ENCODE measurements at regions of chr10 and their contacts with region 1.

Region 1: GRCh38 chr10:132359305-132360040 is 27.5 kb downstream of the LRRC27 start:
- DNase-seq: no peak
- H3K4me3 ChIP-seq: no peak overlapping the region
- H3K27ac ChIP-seq: no peak overlapping the region
- H3K4me1 ChIP-seq: no peaks in the 10 kb centered on the region
- H3K27me3 ChIP-seq: no peaks in the 10 kb centered on the region
- CTCF ChIP-seq: no peak
- POLR2A ChIP-seq: no peak

Region 2: DNA sequence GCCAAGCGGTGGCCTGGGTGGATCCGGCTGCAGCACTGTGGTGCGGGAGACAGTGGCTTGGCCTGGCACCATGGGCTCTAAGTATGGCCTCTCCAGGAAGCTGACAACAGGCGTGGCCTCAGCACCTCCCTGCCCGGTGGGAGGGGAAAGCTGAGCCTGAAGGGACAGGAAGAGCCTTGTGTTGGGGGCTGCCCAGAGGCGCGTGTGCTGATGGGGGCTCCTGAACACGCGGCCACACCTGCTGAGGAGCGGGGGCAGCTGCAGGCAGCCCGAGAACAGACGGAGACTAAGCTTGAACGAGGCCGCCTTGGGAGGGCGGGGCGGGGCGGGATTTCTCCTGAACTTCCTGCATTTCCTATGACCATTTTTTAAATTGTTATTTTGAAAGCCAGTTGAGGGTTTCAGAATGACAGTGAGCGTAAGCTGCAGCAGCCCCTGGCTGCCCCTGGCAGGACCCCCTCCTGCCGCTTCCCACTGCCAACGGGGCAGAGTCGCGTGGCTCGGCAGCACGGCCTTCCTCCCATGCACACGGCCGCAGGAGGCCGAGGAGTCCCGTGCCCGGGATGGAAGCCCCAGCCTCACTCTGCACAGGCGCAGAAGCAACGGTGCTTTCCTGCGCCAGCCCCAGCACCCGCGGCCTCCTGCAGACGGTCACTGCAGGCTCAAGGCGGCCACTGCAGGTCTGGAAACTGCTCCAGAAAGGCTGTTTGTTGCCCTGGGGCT is 129.5 kb before region 1 on chr10:
- intact Hi-C with region 1: loop called (anchors 10 kb)
- DNase-seq: no peak
- H3K4me3 ChIP-seq: peak overlapping the region; percentile 12 to 65 (median 52)
- H3K27ac ChIP-seq: peak overlapping the region; percentile 60 to 62
- H3K4me1 ChIP-seq: no peaks in the 10 kb centered on the region
- H3K27me3 ChIP-seq: no peaks in the 10 kb centered on the region
- CTCF ChIP-seq: no peak
- POLR2A ChIP-seq: no peak